Sigmoid colon (tissue), 7 donors: ENCODE measurements at regions of chr10 and their contacts with region 1.

Region 1: DNA sequence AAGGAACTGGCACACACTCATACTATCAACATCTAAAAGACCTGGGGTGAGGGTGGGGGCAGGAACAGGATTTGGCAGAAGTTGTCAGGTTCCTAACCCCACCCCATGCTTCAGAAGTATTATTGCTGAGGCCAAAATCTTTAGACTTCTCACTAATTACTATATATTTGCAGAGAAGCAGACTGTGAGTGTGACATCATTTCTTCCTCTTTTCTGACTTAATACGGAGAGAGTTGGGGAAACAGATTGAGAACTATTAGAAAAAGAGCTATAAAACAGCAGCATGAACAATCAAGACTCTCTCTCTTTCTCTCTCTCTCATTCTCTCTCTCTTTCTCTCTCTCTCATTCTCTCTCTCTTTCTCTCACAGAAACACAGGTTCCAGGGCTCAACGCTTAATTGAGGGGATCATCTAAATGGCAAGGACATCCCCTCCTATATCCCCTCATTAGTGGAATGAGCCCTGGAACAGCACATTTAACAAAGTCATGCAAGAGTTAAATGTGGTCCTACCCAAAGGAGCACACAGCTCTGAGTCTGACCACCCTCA is 94.8 kb downstream of the KCNMA1 start:
- DNase-seq: no peak
- H3K4me3 ChIP-seq: no peak overlapping the region
- H3K27ac ChIP-seq: peak overlapping the region in 2 of 4 donors; percentile 25 to 31
- H3K4me1 ChIP-seq: peaks cover 0 to 44% (median 27%) of the 10 kb centered on the region in 4 donors
- H3K27me3 ChIP-seq: no peaks in the 10 kb centered on the region
- CTCF ChIP-seq: no peak
- EP300 ChIP-seq: no peak
- POLR2A ChIP-seq: no peak

Region 2: GRCh38 chr10:77555591-77556212 is 12.9 kb after region 1 on chr10:
- intact Hi-C with region 1: loop called (anchors 1 kb)
- DNase-seq: no peak
- H3K4me3 ChIP-seq: no peak overlapping the region
- H3K27ac ChIP-seq: peak overlapping the region; percentile 66 to 86 (median 81)
- H3K4me1 ChIP-seq: peaks cover 0 to 87% (median 71%) of the 10 kb centered on the region in 4 donors
- H3K27me3 ChIP-seq: no peaks in the 10 kb centered on the region
- CTCF ChIP-seq: no peak
- EP300 ChIP-seq: peak; percentile 42 to 89 (median 68)
- POLR2A ChIP-seq: no peak